Activated CD8-positive, alpha-beta T cell treated with anti-CD3 and anti-CD28 coated beads, Interleukin-2, amount 10 ng/mL, durations not matched to agents 7 days and 5 days (primary cell): ENCODE measurements at regions of chr9 and their contacts with region 1.

Region 1: GRCh38 chr9:137319011-137319738 is 17.1 kb upstream of the NRARP start:
- DNase-seq: no peak
- ATAC-seq: no peak
- H3K4me3 Mint-ChIP-seq: no peak overlapping the region
- H3K27ac Mint-ChIP-seq: peak overlapping the region; percentile 70
- H3K4me1 Mint-ChIP-seq: peaks cover 31% of the 10 kb centered on the region
- H3K27me3 Mint-ChIP-seq: no peaks in the 10 kb centered on the region

Region 2: GRCh38 chr9:137302176-137302994 is 16.8 kb before region 1 on chr9 and contains the start of gene NRARP:
- CTCF ChIA-PET with region 1: interaction called, 10 read pairs
- POLR2A ChIA-PET with region 1: interaction called, 8 read pairs
- DNase-seq: peak; percentile 92
- ATAC-seq: peak; percentile 78
- H3K4me3 Mint-ChIP-seq: peak within 1 kb of the TSS; percentile 64
- H3K27ac Mint-ChIP-seq: no peak within 1 kb of the TSS
- H3K4me1 Mint-ChIP-seq: peaks cover 31% of the 10 kb centered on the region
- H3K27me3 Mint-ChIP-seq: peaks cover 24% of the 10 kb centered on the region
- total RNA-seq, gene NRARP: 1.4 to 1.5 TPM

Region 3: GRCh38 chr9:137333016-137333671 is 14.0 kb after region 1 on chr9:
- CTCF ChIA-PET with region 1: no interaction called
- POLR2A ChIA-PET with region 1: no interaction called
- DNase-seq: no peak
- ATAC-seq: no peak
- H3K4me3 Mint-ChIP-seq: no peak overlapping the region
- H3K27ac Mint-ChIP-seq: no peak overlapping the region
- H3K4me1 Mint-ChIP-seq: no peaks in the 10 kb centered on the region
- H3K27me3 Mint-ChIP-seq: peaks cover under 1% of the 10 kb centered on the region